Heart left ventricle (tissue), 16 donors: ENCODE measurements at regions of chr18 and their contacts with region 1.

Region 1: GRCh38 chr18:29780816-29781215 is 1261.7 kb downstream of the DSC3 start:
- DNase-seq: no peak
- ATAC-seq: no peak
- H3K4me3 ChIP-seq: no peak overlapping the region
- H3K27ac ChIP-seq: no peak overlapping the region
- H3K4me1 ChIP-seq: no peaks in the 10 kb centered on the region
- H3K27me3 ChIP-seq: no peaks in the 10 kb centered on the region
- CTCF ChIP-seq: no peak
- POLR2A ChIP-seq: no peak

Region 2: GRCh38 chr18:29605365-29605764 is 175.5 kb before region 1 on chr18:
- intact Hi-C with region 1: loop called in 1 of 10 experiments (anchors 10 kb)
- DNase-seq: peak in 1 of 5 donors; percentile 10
- ATAC-seq: no peak
- H3K4me3 ChIP-seq: no peak overlapping the region
- H3K27ac ChIP-seq: no peak overlapping the region
- H3K4me1 ChIP-seq: no peaks in the 10 kb centered on the region
- H3K27me3 ChIP-seq: no peaks in the 10 kb centered on the region
- CTCF ChIP-seq: no peak
- POLR2A ChIP-seq: no peak

Region 3: DNA sequence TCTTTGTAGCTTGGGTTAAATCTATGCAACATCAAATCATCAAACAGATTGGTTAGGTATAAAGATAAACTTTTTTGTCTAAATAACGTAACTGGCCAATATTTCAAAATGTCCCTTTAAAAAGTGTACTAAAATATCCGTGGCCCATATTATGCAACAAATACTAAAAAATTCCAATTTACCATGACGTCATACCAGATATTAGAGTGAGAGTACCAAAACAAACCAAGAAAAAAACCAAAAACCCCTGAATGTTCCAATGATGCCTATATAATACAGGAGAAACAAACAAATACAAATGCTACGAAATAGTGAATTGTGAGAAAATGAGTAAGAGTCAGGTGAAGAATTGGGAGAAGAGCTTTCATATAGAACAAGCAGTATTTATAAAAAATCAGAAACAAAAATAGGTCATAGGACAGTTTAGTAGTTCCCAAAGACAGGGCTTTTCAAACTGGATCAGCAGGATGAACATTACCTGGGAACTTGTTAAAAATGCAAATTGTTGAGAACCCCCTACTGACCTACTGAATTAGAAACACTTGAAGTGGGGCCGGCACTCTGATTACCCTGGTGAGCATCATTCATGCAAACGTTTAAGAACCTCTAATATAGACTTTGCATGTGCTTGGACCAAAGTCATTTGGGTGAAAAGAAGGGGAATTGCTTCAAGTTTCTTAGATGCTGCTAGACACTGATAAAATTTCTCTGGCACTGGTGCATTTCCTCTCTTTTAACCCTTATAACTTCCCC is 508.0 kb after region 1 on chr18:
- intact Hi-C with region 1: no loop called
- DNase-seq: no peak
- ATAC-seq: no peak
- H3K4me3 ChIP-seq: no peak overlapping the region
- H3K27ac ChIP-seq: no peak overlapping the region
- H3K4me1 ChIP-seq: no peaks in the 10 kb centered on the region
- H3K27me3 ChIP-seq: no peaks in the 10 kb centered on the region
- CTCF ChIP-seq: no peak
- POLR2A ChIP-seq: no peak